ENCODE measurements at regions of chr17 and their contacts with region 1.

Region 1: GRCh38 chr17:32757963-32758362 is 119.0 kb downstream of the MYO1D start:
- DNase-seq: no peak
- ATAC-seq: no peak

Region 2: GRCh38 chr17:32483451-32484019 is 274.4 kb before region 1 on chr17:
- intact Hi-C with region 1: loop called (anchors 1 kb)
- DNase-seq: peak; percentile 87
- ATAC-seq: peak; percentile 93

Region 3: GRCh38 chr17:32909787-32910369 is 151.9 kb after region 1 on chr17:
- intact Hi-C with region 1: no loop called
- DNase-seq: peak; percentile 80
- ATAC-seq: peak; percentile 81

Region 4: DNA sequence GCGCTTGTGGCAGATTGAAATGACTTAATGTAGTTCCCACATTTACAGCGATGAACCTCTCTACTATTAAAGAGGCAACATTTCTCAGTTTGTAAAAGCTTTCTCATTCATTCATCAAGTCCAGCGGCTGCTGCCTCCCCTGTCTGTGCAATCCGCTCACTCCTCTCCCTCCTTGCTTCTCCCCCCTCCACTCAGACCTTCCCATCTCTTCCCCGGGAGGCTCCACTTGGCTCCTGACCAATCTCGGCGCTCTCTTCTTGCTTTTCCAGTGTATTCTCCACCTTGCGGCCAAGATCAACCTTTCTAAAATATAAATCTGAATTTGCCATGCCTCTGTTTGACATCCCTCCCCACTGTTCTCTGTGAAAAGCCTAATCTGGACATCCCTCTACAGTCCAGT is 417.6 kb after region 1 on chr17:
- intact Hi-C with region 1: no loop called
- DNase-seq: no peak
- ATAC-seq: no peak

Measured in sciatic nerve (tissue), 2 donors.